AG04449 (cell line): ENCODE measurements at regions of chr10 and their contacts with region 1.

Region 1: DNA sequence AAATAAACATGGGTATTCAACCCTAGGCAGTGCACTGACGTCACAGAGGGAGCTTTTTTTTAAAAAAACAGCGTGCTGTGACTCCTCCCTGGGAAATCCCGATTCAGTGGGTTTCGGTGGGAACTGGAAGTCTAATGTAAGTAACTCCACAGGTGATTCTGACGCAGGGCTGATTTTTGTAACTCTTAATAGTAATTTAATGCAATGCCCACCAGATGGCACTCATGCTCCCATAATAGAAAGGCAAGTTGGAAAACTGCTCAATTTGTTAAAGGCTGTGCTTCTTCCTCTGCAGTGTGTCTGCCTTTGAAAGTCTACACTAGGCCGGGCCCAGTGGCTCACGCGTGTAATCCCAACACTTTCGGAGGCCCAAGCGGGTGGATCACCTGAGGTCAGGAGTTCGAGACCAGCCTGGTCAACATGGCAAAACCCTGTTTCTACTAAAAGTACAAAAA is 10.9 kb upstream of the RSU1 start:
- DNase-seq: peak; percentile 31
- H3K4me3 ChIP-seq: no peak overlapping the region
- CTCF ChIP-seq: peak; percentile 26

Region 2: DNA sequence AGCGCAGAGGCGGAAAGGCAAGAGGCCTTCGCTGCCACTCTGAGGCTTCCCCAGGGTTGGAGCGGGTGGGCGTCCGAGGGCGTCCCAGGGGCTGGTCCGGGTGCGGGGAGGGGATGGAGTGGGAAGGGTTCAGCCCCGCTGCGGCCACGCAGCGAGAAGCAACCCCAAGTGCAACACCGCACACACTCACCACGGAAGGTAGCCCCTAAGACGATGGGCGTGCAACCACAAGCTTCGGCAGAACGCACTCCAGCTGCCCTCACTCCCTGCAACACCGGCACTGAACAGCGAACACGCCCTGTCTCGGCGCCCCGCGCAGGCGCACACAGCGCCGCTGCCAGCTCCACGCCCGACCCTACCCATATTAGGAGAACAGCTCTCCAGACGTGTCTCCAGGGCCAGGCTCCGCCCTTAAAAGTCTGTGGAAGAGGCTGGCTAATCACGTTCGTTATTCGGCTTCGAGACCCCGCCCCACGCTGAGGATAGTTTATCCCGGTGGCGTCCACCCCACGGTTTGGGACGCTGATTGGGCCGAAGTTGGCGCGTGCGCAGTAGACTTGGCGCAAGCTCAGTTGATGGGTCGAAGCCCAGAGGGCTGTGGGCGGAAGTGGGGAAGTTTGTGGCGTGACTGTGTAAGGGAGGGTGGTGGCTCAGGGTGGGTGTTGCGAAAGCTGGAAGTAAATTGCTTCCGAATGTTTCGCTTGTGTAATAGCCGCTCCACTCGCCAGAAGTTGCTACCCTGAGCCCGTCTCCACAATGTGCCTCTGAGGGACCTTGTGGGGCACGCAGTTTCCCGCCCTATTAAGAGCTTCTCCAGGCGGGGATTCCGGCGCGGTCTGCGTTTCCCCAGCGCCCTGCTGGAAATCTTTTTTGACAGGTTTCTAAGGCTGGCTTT is 10.8 kb before region 1 on chr10 and contains the start of gene RSU1:
- CTCF ChIA-PET with region 1: interaction called, 16 read pairs
- POLR2A ChIA-PET with region 1: interaction called, 4 read pairs
- DNase-seq: peak; percentile 97
- H3K4me3 ChIP-seq: peak within 1 kb of the TSS; percentile 85
- CTCF ChIP-seq: no peak

Region 3: GRCh38 chr10:16843252-16843870 is 15.2 kb after region 1 on chr10:
- CTCF ChIA-PET with region 1: interaction called, 20 read pairs
- POLR2A ChIA-PET with region 1: no interaction called
- DNase-seq: no peak
- H3K4me3 ChIP-seq: no peak overlapping the region
- CTCF ChIP-seq: no peak